Adrenal gland (tissue), 19 donors: ENCODE measurements at regions of chr6 and their contacts with region 1.

Region 1: DNA sequence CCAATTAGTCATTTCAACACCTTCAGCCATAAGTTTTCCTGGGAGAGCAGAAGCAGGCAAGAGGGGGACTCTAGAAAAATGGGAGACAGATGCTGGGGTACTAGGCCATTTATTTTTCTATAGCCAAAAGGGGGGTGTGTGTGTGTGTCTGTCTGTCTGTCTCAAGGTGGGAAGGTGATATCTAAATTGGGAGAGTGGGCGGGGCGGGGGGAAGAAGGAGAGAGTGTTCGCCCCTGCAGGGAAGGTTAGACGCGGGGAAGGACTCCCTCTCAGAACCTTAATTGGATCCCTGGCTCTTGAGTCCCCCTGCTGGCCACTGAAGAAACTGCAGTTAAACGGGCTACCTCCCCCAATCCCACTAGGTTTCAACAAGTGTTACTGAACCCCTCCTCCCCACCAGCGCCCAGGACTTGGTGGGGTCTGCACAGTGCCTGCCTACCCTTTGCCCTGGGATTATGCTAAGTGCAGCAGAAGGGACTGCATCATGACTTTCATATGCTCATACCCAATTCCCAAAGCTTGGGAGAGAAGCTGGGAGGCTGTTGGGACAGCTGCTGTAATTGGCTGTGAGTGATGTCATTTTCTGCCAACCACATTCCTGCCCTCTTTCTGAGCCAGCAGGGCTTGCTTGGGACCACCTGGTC is 45.8 kb downstream of the FOXP4 start:
- DNase-seq: peak; percentile 62 to 90 (median 71)
- H3K4me3 ChIP-seq: no peak overlapping the region
- H3K27ac ChIP-seq: no peak overlapping the region
- H3K4me1 ChIP-seq: no peaks in the 10 kb centered on the region
- H3K27me3 ChIP-seq: no peaks in the 10 kb centered on the region
- CTCF ChIP-seq: peak; percentile 89 to 95 (median 92)
- POLR2A ChIP-seq: no peak

Region 2: DNA sequence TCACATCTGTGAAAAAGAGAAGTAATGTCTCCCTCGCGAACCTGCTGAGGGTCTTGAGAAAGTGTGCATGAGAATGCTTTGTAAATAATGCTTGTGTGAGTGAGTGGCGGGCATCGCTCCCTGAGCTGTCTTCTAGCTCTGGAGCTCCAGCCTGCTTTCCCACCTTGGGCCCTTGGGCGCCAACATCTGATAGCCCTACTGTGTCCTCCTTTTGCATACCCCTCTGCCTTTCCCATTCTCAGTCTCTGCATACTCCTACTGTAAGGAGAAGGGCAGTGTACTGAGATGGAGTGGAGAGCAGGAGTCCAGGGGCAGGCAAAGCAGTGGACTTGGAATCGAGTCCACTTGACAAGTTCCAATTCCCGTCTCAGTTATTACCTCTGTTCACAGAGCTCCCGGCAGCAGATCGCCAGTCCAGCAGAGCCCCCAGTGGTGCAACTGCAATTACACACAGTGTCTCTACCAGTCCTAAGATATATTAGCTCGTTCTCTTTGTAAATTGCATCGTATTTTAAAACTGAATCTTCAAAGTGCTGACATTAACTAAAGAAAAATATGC is 257.4 kb before region 1 on chr6:
- intact Hi-C with region 1: no loop called
- DNase-seq: no peak
- H3K4me3 ChIP-seq: no peak overlapping the region
- H3K27ac ChIP-seq: no peak overlapping the region
- H3K4me1 ChIP-seq: no peaks in the 10 kb centered on the region
- H3K27me3 ChIP-seq: no peaks in the 10 kb centered on the region
- CTCF ChIP-seq: no peak
- POLR2A ChIP-seq: no peak

Region 3: DNA sequence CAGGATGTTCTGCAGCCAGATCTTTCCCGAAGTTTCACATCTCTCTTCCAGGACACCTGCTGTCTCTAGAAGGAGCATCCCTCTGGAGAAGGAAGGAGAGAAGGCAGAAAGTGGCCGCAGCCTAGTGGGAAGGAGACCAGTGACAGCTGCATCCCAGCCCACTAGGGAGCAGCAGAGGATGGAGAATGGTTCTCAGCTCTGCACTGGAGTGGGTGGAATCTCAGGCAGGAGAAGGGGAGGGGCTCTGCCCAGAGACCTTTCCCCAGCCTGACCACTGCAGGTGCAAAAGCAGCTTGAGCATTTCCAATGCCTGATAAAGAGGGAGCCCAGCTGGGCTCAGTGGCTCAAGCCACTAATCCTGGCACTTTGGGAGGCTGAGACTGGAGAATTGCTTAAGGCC is 224.3 kb before region 1 on chr6:
- intact Hi-C with region 1: loop called in 1 of 2 experiments (anchors 5 kb)
- DNase-seq: peak in 5 of 7 donors; percentile 24 to 57 (median 35)
- H3K4me3 ChIP-seq: no peak overlapping the region
- H3K27ac ChIP-seq: no peak overlapping the region
- H3K4me1 ChIP-seq: peaks cover 4 to 13% of the 10 kb centered on the region in 2 donors
- H3K27me3 ChIP-seq: peaks cover 56% of the 10 kb centered on the region
- CTCF ChIP-seq: peak in 5 of 6 experiments; percentile 17 to 50 (median 47)
- POLR2A ChIP-seq: no peak

Region 4: GRCh38 chr6:41424370-41425058 is 167.5 kb before region 1 on chr6:
- intact Hi-C with region 1: loop called (anchors 2 to 5 kb)
- DNase-seq: peak; percentile 67 to 92 (median 79)
- H3K4me3 ChIP-seq: no peak overlapping the region
- H3K27ac ChIP-seq: no peak overlapping the region
- H3K4me1 ChIP-seq: peaks cover 0 to 11% of the 10 kb centered on the region in 2 donors
- H3K27me3 ChIP-seq: peaks cover 25% of the 10 kb centered on the region
- CTCF ChIP-seq: peak; percentile 73 to 80 (median 77)
- POLR2A ChIP-seq: no peak

Region 5: DNA sequence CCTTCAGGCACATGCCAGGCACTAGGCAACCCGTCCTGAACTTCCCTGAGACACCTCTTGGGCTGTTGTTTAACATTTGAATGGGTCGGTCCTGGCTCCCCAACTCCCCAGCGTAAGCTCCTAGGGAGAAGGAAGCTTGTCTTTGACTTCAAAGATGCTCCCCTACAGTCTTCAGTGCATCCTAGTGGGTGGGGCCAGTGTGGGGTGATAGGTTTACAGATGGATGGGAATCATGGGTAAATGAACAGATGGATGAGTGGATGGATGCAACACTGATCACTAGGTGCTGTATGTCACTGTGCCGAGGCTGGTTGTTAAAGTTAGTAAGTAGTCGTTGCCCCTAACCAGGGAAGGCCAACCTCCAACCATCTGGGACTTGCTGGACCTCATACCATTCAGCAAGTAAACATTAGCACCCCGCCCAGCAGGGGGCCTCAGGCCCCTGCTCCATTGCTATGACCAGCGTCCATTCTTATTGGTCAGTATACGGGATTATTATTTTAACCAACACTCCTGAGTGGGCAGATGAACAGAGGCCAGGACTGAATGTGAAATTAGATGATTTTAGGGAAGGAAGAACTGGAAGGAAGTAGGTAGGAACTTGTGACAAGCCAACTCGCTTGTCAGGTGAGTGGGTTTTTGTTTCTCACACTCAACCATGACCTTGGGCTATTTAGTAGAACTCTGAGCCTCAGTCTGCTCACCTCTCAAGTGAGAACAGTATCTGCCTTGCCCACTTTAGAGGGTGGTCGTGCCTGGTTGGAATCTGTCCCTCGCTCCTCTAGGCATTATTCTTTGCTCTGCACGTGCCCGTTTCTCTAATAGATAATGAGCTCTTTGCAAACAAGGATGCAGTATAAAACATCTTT is 128.7 kb before region 1 on chr6:
- intact Hi-C with region 1: loop called (anchors 5 kb)
- DNase-seq: peak; percentile 39 to 83 (median 67)
- H3K4me3 ChIP-seq: no peak overlapping the region
- H3K27ac ChIP-seq: no peak overlapping the region
- H3K4me1 ChIP-seq: no peaks in the 10 kb centered on the region
- H3K27me3 ChIP-seq: peaks cover 9% of the 10 kb centered on the region
- CTCF ChIP-seq: peak; percentile 45 to 64 (median 55)
- POLR2A ChIP-seq: no peak

Region 6: DNA sequence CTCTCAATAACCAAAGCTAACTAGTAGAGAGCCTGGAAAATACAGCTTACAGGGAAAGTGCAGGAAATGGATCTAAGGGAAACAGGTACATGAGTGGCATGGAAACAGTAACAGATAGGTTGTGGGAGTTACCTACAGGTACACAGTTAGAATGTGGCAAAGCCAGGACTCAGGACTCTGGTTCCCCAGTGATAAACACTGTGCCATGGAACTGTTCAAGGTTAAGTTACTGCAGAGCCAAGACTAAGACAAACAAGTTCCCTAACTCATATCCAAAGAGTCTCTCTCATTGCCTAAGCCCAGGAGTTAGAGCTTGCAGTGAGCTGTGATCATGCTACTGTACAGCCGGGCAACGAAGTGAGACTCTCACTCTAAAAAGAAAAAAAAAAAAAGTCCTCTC is 322.4 kb after region 1 on chr6:
- intact Hi-C with region 1: no loop called
- DNase-seq: no peak
- H3K4me3 ChIP-seq: no peak overlapping the region
- H3K27ac ChIP-seq: peak overlapping the region in 1 of 5 donors; percentile 50
- H3K4me1 ChIP-seq: peaks cover 27 to 30% of the 10 kb centered on the region in 2 donors
- H3K27me3 ChIP-seq: no peaks in the 10 kb centered on the region
- CTCF ChIP-seq: no peak
- POLR2A ChIP-seq: no peak